Ascending aorta (tissue), 2 donors: ENCODE measurements at regions of chr15 and their contacts with region 1.

Region 1: GRCh38 chr15:42427429-42428223 is 63.3 kb downstream of the ZNF106 start:
- DNase-seq: no peak
- H3K4me3 ChIP-seq: no peak overlapping the region
- H3K27ac ChIP-seq: peak overlapping the region; percentile 82 to 89
- H3K4me1 ChIP-seq: peaks cover 0 to 10% of the 10 kb centered on the region in 2 donors
- H3K27me3 ChIP-seq: no peaks in the 10 kb centered on the region
- CTCF ChIP-seq: no peak

Region 2: DNA sequence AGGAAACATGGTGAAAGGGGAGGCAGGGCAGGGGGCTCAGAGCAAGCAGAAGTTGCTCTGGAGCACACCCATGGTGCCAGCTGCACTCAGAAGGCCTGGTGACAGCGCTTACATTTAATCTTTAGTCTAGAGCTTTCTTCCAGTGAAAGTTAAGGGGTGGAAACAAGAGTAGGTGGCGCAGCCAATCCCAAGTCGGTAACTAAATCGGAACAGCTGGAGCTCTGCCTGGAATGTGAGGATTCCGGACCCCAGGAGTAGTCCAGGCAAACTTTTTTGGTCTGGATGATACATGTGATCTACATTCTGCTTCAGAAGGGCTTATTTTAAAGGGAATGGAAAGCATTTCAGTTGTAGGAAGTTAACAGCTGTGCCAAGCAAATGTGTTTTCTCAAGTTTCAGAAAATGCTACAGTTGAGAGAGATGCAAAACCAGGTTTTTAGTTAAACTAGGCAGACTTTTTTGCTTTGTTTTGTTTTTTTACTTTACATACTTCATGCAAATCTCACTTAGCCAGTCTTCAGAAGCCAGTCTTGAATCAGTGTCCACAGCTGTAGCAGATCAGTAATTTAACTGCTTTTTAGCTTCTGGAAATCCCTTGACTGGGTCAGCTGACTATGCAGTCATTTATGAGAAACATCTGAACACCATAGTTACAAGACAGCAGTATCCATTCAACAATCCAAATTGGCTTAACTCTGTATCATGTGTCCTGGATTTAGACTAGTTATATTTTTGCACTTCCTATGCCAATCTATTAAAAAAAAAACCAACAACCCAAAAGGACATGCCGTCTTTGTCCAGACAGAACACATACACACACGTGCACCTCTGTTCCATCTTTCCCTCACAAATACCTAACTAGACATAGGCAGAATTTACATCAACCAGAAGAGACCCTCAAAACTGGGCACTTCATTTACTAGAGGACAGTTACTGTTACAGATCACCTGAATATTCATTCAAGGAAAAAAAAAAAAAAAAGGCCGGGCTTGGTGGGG is 30.1 kb after region 1 on chr15:
- intact Hi-C with region 1: loop called (anchors 2 kb)
- DNase-seq: peak; percentile 13 to 92
- H3K4me3 ChIP-seq: peak overlapping the region; percentile 38 to 50
- H3K27ac ChIP-seq: peak overlapping the region; percentile 84 to 90
- H3K4me1 ChIP-seq: peaks cover 4 to 20% of the 10 kb centered on the region in 2 donors
- H3K27me3 ChIP-seq: no peaks in the 10 kb centered on the region
- CTCF ChIP-seq: no peak

Region 3: GRCh38 chr15:42465520-42466259 is 38.1 kb after region 1 on chr15:
- intact Hi-C with region 1: loop called (anchors 2 kb)
- DNase-seq: no peak
- H3K4me3 ChIP-seq: no peak overlapping the region
- H3K27ac ChIP-seq: no peak overlapping the region
- H3K4me1 ChIP-seq: peaks cover 4 to 11% of the 10 kb centered on the region in 2 donors
- H3K27me3 ChIP-seq: no peaks in the 10 kb centered on the region
- CTCF ChIP-seq: no peak